PC-3 (cell line): ENCODE measurements at regions of chr18 and their contacts with region 1.

Region 1: GRCh38 chr18:11733031-11733430 is 44.0 kb downstream of the GNAL start:
- DNase-seq: peak; percentile 85
- ATAC-seq: peak; percentile 95
- H3K4me3 ChIP-seq: peak overlapping the region; percentile 58
- H3K27ac ChIP-seq: no peak overlapping the region
- H3K4me1 ChIP-seq: peaks cover 9% of the 10 kb centered on the region; the same call in 1 of the 2 replicates
- H3K27me3 ChIP-seq: peaks cover 75% of the 10 kb centered on the region
- CTCF ChIP-seq: peak; percentile 96

Region 2: GRCh38 chr18:10851824-10852319 is 881.2 kb before region 1 on chr18:
- CTCF ChIA-PET with region 1: no interaction called
- POLR2A ChIA-PET with region 1: no interaction called
- intact Hi-C with region 1: loop called (anchors 5 kb)
- DNase-seq: peak; percentile 75
- ATAC-seq: peak; percentile 63
- H3K4me3 ChIP-seq: no peak overlapping the region
- H3K27ac ChIP-seq: no peak overlapping the region
- H3K4me1 ChIP-seq: no peaks in the 10 kb centered on the region
- H3K27me3 ChIP-seq: peaks cover 77% of the 10 kb centered on the region
- CTCF ChIP-seq: peak; percentile 83

Region 3: GRCh38 chr18:11577271-11578112 is 155.5 kb before region 1 on chr18:
- CTCF ChIA-PET with region 1: no interaction called
- POLR2A ChIA-PET with region 1: no interaction called
- intact Hi-C with region 1: no loop called
- DNase-seq: no peak
- ATAC-seq: no peak
- H3K4me3 ChIP-seq: no peak overlapping the region
- H3K27ac ChIP-seq: no peak overlapping the region
- H3K4me1 ChIP-seq: no peaks in the 10 kb centered on the region
- H3K27me3 ChIP-seq: peaks cover 84% of the 10 kb centered on the region
- CTCF ChIP-seq: no peak

Region 4: GRCh38 chr18:11851146-11851805 is 118.2 kb after region 1 on chr18 and contains the start of gene CHMP1B:
- CTCF ChIA-PET with region 1: no interaction called
- POLR2A ChIA-PET with region 1: interaction called, 7 read pairs
- intact Hi-C with region 1: loop called (anchors 5 kb)
- DNase-seq: peak; percentile 97
- ATAC-seq: peak; percentile 84
- H3K4me3 ChIP-seq: peak within 1 kb of the TSS; percentile 91
- H3K27ac ChIP-seq: peak within 1 kb of the TSS; percentile 96
- H3K4me1 ChIP-seq: peaks cover 35% of the 10 kb centered on the region
- H3K27me3 ChIP-seq: no peaks in the 10 kb centered on the region
- CTCF ChIP-seq: no peak
- total RNA-seq, gene CHMP1B: 81.9 and 89.5 TPM in 2 replicates

Region 5: GRCh38 chr18:11937874-11938478 is 204.9 kb after region 1 on chr18:
- CTCF ChIA-PET with region 1: interaction called, 4 read pairs
- POLR2A ChIA-PET with region 1: interaction called, 8 read pairs
- intact Hi-C with region 1: loop called (anchors 5 kb)
- DNase-seq: peak; percentile 87
- ATAC-seq: peak; percentile 84
- H3K4me3 ChIP-seq: no peak overlapping the region
- H3K27ac ChIP-seq: no peak overlapping the region
- H3K4me1 ChIP-seq: no peaks in the 10 kb centered on the region
- H3K27me3 ChIP-seq: no peaks in the 10 kb centered on the region
- CTCF ChIP-seq: peak; percentile 91

Region 6: GRCh38 chr18:12038639-12039417 is 305.8 kb after region 1 on chr18:
- CTCF ChIA-PET with region 1: no interaction called
- POLR2A ChIA-PET with region 1: no interaction called
- intact Hi-C with region 1: loop called (anchors 2 kb)
- DNase-seq: peak; percentile 83
- ATAC-seq: peak; percentile 93
- H3K4me3 ChIP-seq: peak overlapping the region; percentile 74
- H3K27ac ChIP-seq: no peak overlapping the region
- H3K4me1 ChIP-seq: peaks cover 13% of the 10 kb centered on the region; the same call in 1 of the 2 replicates
- H3K27me3 ChIP-seq: no peaks in the 10 kb centered on the region
- CTCF ChIP-seq: peak; percentile 94

Region 7: DNA sequence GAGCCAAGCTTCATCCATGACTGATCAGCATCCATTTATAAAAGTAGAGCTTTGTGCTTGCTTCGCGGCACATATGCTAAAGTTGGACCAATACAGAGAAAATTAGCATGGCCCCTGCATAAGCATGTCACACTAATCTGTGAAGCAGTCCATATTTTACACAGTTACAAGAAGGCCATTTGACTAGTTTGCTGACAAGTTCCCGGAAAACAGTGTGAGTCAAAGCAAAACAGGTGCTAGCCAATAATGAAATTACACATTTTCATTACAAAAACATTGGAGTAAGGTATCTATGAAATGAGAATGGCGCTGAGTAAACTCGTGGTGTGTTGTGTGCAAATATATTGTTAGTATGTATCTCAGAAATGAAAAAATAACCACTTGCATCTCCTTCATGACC is 365.3 kb after region 1 on chr18:
- CTCF ChIA-PET with region 1: no interaction called
- POLR2A ChIA-PET with region 1: no interaction called
- intact Hi-C with region 1: no loop called
- DNase-seq: no peak
- ATAC-seq: no peak
- H3K4me3 ChIP-seq: no peak overlapping the region
- H3K27ac ChIP-seq: no peak overlapping the region
- H3K4me1 ChIP-seq: peaks cover 6% of the 10 kb centered on the region
- H3K27me3 ChIP-seq: peaks cover 29% of the 10 kb centered on the region
- CTCF ChIP-seq: no peak